ENCODE measurements at regions of chr4 and their contacts with region 1.

Region 1: DNA sequence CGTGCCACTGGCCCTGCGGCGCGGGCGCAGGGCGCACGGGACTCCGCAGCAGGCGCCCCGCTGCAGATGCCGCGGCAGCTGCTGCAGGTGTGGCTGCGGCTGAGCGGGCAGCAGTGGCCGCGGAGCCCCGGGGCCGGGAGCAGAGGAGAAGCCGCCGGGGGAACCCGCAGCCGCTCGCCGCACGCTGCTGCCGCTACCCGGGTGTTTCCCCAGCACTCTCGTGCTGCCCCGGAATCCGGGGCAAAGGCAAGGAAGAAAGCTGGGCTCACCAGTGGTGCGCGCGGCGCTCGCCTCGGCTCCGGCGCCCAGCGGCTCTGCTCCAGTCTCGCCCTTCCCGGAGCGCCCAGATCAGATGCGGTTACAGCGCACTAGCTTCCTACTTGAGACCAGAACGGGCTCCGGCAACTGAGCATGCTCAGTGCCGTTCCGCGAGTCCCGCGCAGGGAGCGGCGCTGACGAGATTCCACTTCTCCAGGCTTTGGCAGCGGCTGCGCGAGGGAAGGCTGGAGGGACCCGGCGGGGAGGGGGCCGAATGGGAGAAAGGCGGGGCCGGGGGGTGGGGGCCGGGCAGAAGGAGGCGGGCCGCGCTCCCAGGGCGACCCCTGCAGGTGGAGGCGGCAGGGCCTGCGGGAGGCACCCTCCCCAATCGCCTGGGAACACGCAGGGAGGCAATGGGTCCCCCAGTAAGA is at the start of gene APBB2:
- DNase-seq: peak; percentile 74 to 86 (median 84)
- ATAC-seq: peak; percentile 93
- H3K4me3 ChIP-seq: peak within 1 kb of the TSS; percentile 43
- H3K27ac ChIP-seq: no peak within 1 kb of the TSS
- H3K4me1 ChIP-seq: peaks cover 0 to 12% of the 10 kb centered on the region in 2 experiments; a peak in 2 of 5 replicates
- H3K27me3 ChIP-seq: peaks cover 11 to 17% of the 10 kb centered on the region in 2 experiments; a peak in 4 of 5 replicates
- CTCF ChIP-seq: peak; percentile 35 to 64 (median 55); a peak in 4 of 6 replicates
- EP300 ChIP-seq: no peak
- POLR2A ChIP-seq: no peak
- RAD21 ChIP-seq: peak; percentile 24 to 26; a peak in 3 of 4 replicates
- polyA plus RNA-seq, gene APBB2: 0.08 to 0.24 TPM

Region 2: DNA sequence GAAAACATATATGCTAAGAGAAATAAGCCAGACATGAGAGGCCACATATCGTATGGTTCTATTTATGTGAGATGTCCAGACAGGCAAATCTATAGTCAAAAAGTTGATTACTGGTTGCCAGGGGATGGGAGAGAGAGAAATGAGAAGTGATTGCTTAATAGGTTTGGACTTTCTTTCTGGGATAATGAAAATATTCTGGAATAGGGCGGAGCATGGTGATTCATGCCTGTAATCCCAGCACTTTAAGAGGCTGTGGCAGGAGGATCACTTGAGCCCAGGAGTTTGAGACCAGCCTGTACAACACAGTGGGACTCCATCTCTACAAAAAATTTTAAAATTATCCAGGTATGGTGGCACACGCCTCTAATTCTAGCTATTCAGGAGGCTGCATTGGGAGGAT is 607.1 kb before region 1 on chr4:
- CTCF ChIA-PET with region 1: no interaction called
- POLR2A ChIA-PET with region 1: no interaction called
- in situ Hi-C with region 1: no loop called
- intact Hi-C with region 1: no loop called
- DNase-seq: no peak
- ATAC-seq: no peak
- H3K4me3 ChIP-seq: no peak overlapping the region
- H3K27ac ChIP-seq: no peak overlapping the region
- H3K4me1 ChIP-seq: no peaks in the 10 kb centered on the region
- H3K27me3 ChIP-seq: peaks cover 39 to 48% of the 10 kb centered on the region in 2 experiments
- CTCF ChIP-seq: no peak
- EP300 ChIP-seq: no peak
- POLR2A ChIP-seq: no peak
- RAD21 ChIP-seq: no peak

Region 3: GRCh38 chr4:40927074-40927473 is 287.2 kb before region 1 on chr4:
- CTCF ChIA-PET with region 1: interaction called, 5 read pairs
- POLR2A ChIA-PET with region 1: no interaction called
- in situ Hi-C with region 1: no loop called
- intact Hi-C with region 1: loop called (anchors 2 kb)
- DNase-seq: no peak
- ATAC-seq: no peak
- H3K4me3 ChIP-seq: no peak overlapping the region
- H3K27ac ChIP-seq: no peak overlapping the region
- H3K4me1 ChIP-seq: no peaks in the 10 kb centered on the region; a peak in 1 of 5 replicates
- H3K27me3 ChIP-seq: peaks cover under 1 to 17% of the 10 kb centered on the region in 2 experiments; a peak in 4 of 5 replicates
- CTCF ChIP-seq: no peak
- EP300 ChIP-seq: no peak
- POLR2A ChIP-seq: no peak
- RAD21 ChIP-seq: no peak

Region 4: DNA sequence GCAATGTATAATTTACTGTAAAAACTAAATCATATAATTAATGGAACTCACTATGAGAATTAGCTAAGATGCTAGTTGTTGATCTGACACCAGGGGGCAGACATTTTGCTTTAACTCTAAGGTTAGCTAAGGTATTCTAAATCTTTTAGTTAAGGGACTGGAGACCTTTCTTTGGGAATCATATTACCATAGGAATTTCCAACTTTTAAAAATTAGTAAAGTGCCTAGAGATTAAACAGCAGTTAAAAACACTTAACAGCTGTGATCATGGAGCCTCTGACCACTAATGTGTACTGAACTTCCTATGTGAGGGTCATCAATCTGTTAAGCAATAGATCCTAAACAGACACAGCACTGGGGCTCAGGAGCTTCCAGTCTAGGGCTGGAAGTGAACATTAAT is 237.9 kb before region 1 on chr4:
- CTCF ChIA-PET with region 1: interaction called, 6 read pairs
- POLR2A ChIA-PET with region 1: no interaction called
- in situ Hi-C with region 1: loop called (anchors 10 kb)
- intact Hi-C with region 1: loop called (anchors 2 kb)
- DNase-seq: peak; percentile 22 to 33 (median 31)
- ATAC-seq: peak; percentile 64; the same call in 2 of the 3 replicates
- H3K4me3 ChIP-seq: no peak overlapping the region
- H3K27ac ChIP-seq: no peak overlapping the region
- H3K4me1 ChIP-seq: no peaks in the 10 kb centered on the region
- H3K27me3 ChIP-seq: no peaks in the 10 kb centered on the region
- CTCF ChIP-seq: peak in 1 of 3 experiments; percentile 64; a peak in 2 of 6 replicates
- EP300 ChIP-seq: no peak
- POLR2A ChIP-seq: no peak
- RAD21 ChIP-seq: peak; percentile 50

Region 5: GRCh38 chr4:41196633-41197332 is 17.5 kb before region 1 on chr4:
- CTCF ChIA-PET with region 1: no interaction called
- POLR2A ChIA-PET with region 1: no interaction called
- in situ Hi-C with region 1: no loop called
- intact Hi-C with region 1: no loop called
- DNase-seq: no peak
- ATAC-seq: no peak
- H3K4me3 ChIP-seq: no peak overlapping the region
- H3K27ac ChIP-seq: no peak overlapping the region
- H3K4me1 ChIP-seq: no peaks in the 10 kb centered on the region
- H3K27me3 ChIP-seq: peaks cover 3 to 9% of the 10 kb centered on the region in 2 experiments; a peak in 2 of 5 replicates
- CTCF ChIP-seq: no peak
- EP300 ChIP-seq: no peak
- POLR2A ChIP-seq: no peak
- RAD21 ChIP-seq: no peak

Region 6: GRCh38 chr4:41281038-41281634 is 66.9 kb after region 1 on chr4:
- CTCF ChIA-PET with region 1: no interaction called
- POLR2A ChIA-PET with region 1: no interaction called
- in situ Hi-C with region 1: no loop called
- intact Hi-C with region 1: no loop called
- DNase-seq: peak; percentile 65 to 74 (median 70)
- ATAC-seq: peak; percentile 97
- H3K4me3 ChIP-seq: no peak overlapping the region
- H3K27ac ChIP-seq: no peak overlapping the region
- H3K4me1 ChIP-seq: no peaks in the 10 kb centered on the region
- H3K27me3 ChIP-seq: no peaks in the 10 kb centered on the region
- CTCF ChIP-seq: peak; percentile 73 to 92 (median 79)
- EP300 ChIP-seq: no peak
- POLR2A ChIP-seq: no peak
- RAD21 ChIP-seq: peak; percentile 91 to 93